GM12878 (cell line): ENCODE measurements at regions of chr1 and their contacts with region 1.

Region 1: DNA sequence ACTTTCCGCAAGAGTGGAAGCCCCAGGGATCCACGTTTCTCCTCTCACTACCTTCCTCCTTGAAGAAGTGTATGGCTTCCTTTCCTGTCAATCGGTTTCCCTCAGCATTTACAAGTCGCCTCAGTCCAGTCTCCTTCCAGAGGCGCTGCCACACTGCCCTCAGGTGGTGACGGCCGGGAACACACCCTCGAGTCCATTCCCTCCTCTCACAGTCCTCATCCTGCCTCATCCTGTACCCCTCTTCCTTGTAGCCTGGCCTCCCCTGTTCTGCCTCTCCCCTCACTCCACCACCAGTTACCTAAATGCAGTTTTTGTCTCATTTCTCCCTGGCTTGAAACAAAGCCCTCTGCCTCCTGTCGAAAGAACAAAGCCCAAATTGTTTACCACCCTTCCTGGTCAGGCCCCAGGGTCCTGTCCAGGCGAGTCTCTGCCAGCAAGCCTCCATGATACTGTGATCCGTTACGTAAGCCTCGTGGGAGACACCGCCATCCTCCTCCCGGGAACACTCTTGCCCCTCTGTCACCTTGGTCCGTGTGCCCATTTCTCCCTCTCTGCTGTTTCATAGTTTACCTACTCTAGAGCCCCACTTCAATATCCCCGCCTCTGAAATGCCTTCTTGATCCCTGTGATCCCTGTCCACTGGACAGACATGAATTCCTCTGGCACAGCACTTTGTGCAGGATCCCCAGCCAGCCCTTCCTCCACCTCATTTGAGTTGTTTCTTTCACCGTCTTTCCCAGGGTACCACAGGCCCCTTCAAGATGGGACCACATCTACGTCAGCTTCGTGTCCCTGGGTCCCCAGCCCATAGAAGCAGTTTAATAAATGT is 23.3 kb upstream of the LSM10 start:
- DNase-seq: peak; percentile 74
- ATAC-seq: peak; percentile 100
- H3K4me3 ChIP-seq: no peak overlapping the region
- H3K27ac ChIP-seq: peak overlapping the region; percentile 31; the same call in 1 of the 2 replicates
- H3K4me1 ChIP-seq: peaks cover 6% of the 10 kb centered on the region; the same call in 1 of the 2 replicates
- H3K27me3 ChIP-seq: no peaks in the 10 kb centered on the region
- CTCF ChIP-seq: peak; percentile 95 to 98 (median 96); a peak in 5 of 6 replicates
- EP300 ChIP-seq: no peak
- POLR2A ChIP-seq: no peak
- RAD21 ChIP-seq: peak; percentile 97

Region 2: DNA sequence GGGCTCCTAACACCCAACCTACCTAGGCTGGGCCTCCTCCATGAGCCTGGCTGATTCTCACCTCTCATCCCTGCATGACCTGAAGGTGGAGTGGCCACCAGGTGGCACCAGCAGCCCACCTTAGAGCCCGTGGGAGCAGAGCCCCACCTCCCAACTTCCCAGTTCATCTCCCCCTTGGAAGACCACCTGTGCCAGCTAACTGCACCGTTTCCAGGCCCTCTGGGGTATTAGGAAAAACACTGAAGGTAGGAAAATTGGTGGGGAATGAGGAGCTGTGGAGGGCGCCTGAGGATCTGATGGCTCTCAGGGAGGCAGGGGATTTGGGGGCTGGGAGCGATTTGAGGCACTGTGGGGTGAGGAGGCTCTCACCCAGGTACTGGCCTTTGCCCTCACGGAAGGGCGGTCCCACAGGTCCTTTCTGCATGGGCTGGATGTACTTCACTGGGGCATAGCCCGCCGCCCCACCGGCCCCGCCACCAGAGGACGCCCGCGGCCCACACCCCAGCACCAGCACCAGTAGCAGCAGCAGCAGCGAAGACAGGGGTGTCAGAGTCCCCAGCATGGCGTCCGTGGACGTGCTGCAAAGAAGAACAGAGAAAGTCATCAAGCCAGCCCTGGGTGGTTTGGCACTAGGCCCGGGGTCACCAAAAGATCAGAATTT is 321.2 kb before region 1 on chr1:
- CTCF ChIA-PET with region 1: interaction called, 3 read pairs
- POLR2A ChIA-PET with region 1: no interaction called
- RAD21 ChIA-PET with region 1: interaction called, 4 read pairs
- SMC1A ChIA-PET with region 1: no interaction called
- in situ Hi-C with region 1: no loop called
- intact Hi-C with region 1: loop called (anchors 5 kb)
- DNase-seq: no peak
- ATAC-seq: peak; percentile 96
- H3K4me3 ChIP-seq: no peak overlapping the region
- H3K27ac ChIP-seq: no peak overlapping the region
- H3K4me1 ChIP-seq: no peaks in the 10 kb centered on the region
- H3K27me3 ChIP-seq: no peaks in the 10 kb centered on the region
- CTCF ChIP-seq: peak; percentile 82 to 88 (median 86)
- EP300 ChIP-seq: no peak
- POLR2A ChIP-seq: no peak
- RAD21 ChIP-seq: peak; percentile 95

Region 3: DNA sequence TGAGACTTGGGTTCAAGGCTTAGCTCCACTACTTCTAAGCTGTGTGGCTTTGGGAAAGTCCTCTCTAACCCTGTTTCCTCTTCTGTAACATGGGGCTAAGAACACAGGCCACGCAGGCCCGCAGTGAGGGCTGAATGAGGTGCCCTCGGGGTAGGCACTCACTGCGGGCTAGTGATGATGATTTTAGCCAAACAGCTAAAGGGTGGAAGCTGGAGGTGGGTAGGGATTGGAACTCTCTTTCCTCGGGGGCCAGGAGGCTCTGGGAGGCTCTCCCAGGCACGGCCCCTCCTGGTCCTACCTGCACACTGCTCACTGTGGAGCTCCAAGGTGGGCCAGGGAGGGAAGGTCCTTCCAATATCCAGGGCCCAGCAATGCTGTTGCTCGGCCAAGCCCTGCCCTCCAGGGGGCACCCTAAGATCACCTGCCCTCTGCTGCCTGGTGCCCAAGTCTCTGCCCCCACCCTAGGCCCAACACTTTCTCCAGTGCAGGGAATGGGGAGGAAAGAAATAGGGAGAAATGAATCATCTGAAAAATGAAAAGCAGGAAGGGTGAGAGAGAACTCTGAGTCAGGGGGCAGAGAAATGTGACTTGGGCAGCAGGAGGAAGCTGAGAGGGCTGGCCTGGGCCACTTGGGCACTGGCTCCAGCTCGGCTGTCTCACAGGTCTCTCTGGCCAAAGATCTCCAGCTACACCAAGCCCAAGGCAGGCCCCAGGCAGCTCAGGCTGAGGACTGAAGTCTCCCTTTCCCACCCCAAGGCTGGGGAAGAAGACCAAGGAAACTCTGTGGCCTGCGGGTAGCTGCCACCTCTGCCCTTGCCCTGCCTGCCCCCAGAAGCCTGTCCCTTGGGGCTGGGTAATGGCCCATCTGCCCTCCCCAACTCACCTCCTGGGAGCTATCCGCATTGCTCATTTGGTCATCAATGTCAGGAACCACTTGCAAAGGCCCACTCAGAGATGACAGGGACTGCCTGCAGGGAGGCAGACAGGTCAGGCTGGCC is 78.3 kb before region 1 on chr1:
- CTCF ChIA-PET with region 1: interaction called, 59 read pairs
- POLR2A ChIA-PET with region 1: no interaction called
- RAD21 ChIA-PET with region 1: interaction called, 37 read pairs
- SMC1A ChIA-PET with region 1: interaction called, 16 read pairs
- in situ Hi-C with region 1: loop called (anchors 5 kb)
- intact Hi-C with region 1: loop called (anchors 1 kb)
- DNase-seq: no peak
- ATAC-seq: peak; percentile 93
- H3K4me3 ChIP-seq: no peak overlapping the region
- H3K27ac ChIP-seq: no peak overlapping the region
- H3K4me1 ChIP-seq: no peaks in the 10 kb centered on the region
- H3K27me3 ChIP-seq: no peaks in the 10 kb centered on the region
- CTCF ChIP-seq: peak; percentile 68 to 90 (median 87)
- EP300 ChIP-seq: no peak
- POLR2A ChIP-seq: no peak
- RAD21 ChIP-seq: peak; percentile 93

Region 4: GRCh38 chr1:36350659-36351226 is 70.3 kb before region 1 on chr1:
- CTCF ChIA-PET with region 1: interaction called, 12 read pairs
- POLR2A ChIA-PET with region 1: interaction called, 3 read pairs
- RAD21 ChIA-PET with region 1: interaction called, 10 read pairs
- SMC1A ChIA-PET with region 1: interaction called, 9 read pairs
- in situ Hi-C with region 1: loop called (anchors 5 kb)
- intact Hi-C with region 1: no loop called
- DNase-seq: no peak
- ATAC-seq: peak; percentile 49
- H3K4me3 ChIP-seq: no peak overlapping the region
- H3K27ac ChIP-seq: peak overlapping the region; percentile 79
- H3K4me1 ChIP-seq: peaks cover 37% of the 10 kb centered on the region
- H3K27me3 ChIP-seq: no peaks in the 10 kb centered on the region
- CTCF ChIP-seq: no peak
- EP300 ChIP-seq: no peak
- POLR2A ChIP-seq: no peak
- RAD21 ChIP-seq: no peak